HepG2 (cell line): ENCODE measurements at regions of chrX and their contacts with region 1.

Region 1: DNA sequence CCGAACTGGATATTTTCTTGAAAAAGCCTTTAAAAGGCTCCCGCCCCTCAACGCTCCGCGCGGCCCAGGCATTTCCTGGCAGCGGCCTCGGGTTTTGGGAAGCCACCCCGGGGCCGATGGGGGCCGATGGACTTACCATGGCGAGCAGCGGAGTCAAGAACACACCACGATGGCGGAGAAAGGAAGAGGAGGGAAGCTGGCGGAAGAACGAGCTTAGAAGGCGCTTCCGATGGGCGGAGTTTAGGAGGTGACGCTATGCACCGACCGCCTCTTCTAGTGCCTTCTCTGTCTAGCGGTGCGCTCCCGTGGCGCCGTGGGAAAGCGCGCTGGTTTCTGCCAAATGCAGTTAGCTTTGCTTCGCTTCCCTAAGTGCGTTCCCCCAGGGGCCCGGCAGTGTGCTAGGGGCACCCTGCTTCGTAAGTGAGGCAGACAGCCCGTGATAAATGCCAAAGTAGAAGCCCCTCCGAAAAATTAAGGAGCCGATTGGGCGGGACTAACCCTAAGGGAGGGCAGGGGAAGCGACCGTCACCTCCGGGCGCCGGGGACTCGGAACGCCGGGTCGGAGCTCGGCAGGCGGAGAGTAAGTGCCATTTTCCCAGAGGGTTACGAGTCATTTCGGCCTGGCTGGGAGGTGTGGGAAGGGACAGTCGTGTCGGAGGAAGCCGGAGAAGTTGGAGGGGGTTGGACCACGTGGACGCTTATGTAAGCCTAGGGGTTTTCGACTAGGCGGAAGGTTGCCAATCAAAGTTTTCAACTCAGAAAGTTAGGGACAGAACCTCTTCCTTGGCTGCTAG is at the start of gene RPL39:
- DNase-seq: peak; percentile 81
- ATAC-seq: peak; percentile 95
- H3K4me3 ChIP-seq: peak within 1 kb of the TSS; percentile 77 to 83 (median 79)
- H3K27ac ChIP-seq: peak within 1 kb of the TSS; percentile 98
- H3K4me1 ChIP-seq: peaks cover 38% of the 10 kb centered on the region
- H3K27me3 ChIP-seq: no peaks in the 10 kb centered on the region
- CTCF ChIP-seq: no peak
- EP300 ChIP-seq: no peak
- POLR2A ChIP-seq: peak; percentile 88 to 92
- RAD21 ChIP-seq: peak; percentile 5; the same call in 1 of the 2 replicates
- total RNA-seq, gene RPL39: 3,547 and 3,928 TPM in 2 replicates

Region 2: DNA sequence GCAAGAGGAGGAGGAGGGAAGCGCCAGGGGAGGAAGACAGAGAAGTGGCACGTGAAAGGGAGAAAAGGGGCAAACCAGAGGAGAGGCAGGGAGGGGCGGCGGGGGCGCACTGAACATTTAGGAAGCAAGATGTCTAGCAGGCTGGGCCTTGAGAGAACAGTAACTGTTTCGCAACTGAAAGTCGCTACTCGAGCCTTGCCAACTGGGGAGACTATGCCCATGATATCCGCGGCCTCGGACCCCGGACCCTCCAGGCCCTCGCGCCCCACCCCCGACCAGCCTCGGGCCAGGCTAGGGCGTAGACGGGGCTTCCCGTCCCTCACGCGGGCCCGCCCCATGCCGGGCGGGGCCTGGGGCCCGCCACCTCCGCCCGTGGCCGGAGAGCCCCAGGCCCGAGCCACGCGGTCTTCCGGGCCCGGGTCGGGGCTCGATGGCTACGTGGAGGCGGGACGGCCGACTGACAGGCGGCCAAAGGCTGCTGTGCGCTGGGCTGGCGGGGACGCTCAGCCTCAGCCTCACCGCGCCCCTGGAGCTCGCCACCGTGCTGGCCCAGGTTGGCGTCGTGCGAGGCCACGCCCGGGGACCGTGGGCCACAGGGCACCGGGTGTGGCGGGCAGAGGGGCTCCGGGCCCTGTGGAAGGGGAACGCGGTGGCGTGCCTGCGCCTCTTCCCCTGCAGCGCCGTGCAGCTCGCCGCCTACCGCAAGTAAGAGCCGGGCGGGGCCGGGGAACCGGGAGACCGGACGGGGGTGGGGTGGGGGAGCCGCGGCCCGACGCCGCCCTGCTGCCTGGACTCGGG is 392.5 kb before region 1 on chrX and contains the start of gene SLC25A43:
- CTCF ChIA-PET with region 1: no interaction called
- POLR2A ChIA-PET with region 1: no interaction called
- in situ Hi-C with region 1: no loop called
- intact Hi-C with region 1: no loop called
- DNase-seq: no peak
- ATAC-seq: peak; percentile 93
- H3K4me3 ChIP-seq: peak within 1 kb of the TSS; percentile 60 to 71 (median 69); a peak in 5 of 6 replicates
- H3K27ac ChIP-seq: peak within 1 kb of the TSS; percentile 65
- H3K4me1 ChIP-seq: peaks cover 27% of the 10 kb centered on the region
- H3K27me3 ChIP-seq: no peaks in the 10 kb centered on the region
- CTCF ChIP-seq: no peak
- EP300 ChIP-seq: no peak
- POLR2A ChIP-seq: peak; percentile 43 to 58; a peak in 3 of 4 replicates
- RAD21 ChIP-seq: no peak
- total RNA-seq, gene SLC25A43: 13.2 and 14.1 TPM in 2 replicates

Region 3: DNA sequence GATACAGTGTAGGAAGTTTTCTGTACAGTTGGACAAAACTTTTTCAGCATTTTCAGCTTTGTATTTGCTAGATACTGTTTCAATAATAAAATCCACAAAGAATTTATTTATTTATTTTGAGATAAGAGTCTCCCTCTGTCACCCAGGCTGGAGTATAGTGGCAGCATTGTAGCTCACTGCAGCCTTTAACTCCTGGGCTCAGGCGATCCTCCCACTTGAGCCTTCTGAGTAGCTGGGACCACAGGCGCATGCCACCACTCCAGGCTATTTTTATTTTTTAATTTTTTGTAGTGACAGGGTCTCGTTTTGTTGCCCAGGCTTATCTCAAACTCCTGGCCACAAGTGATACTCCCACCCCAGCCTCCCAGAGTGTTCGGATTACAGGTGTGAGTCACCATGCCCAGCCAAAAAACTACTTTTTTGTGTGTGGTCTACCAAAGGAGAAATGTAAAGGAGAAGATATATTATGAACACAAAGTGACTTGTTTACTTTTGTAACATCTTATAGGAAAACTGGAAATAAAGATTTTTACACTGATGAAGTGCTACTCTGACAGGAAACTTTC is 46.3 kb before region 1 on chrX:
- CTCF ChIA-PET with region 1: no interaction called
- POLR2A ChIA-PET with region 1: no interaction called
- in situ Hi-C with region 1: no loop called
- intact Hi-C with region 1: no loop called
- DNase-seq: no peak
- ATAC-seq: 0 out of 3 replicates have a peak, but pooled peaks have one; percentile 29
- H3K4me3 ChIP-seq: no peak overlapping the region
- H3K27ac ChIP-seq: no peak overlapping the region
- H3K4me1 ChIP-seq: no peaks in the 10 kb centered on the region
- H3K27me3 ChIP-seq: no peaks in the 10 kb centered on the region
- CTCF ChIP-seq: no peak
- EP300 ChIP-seq: no peak
- POLR2A ChIP-seq: no peak
- RAD21 ChIP-seq: no peak

Region 4: DNA sequence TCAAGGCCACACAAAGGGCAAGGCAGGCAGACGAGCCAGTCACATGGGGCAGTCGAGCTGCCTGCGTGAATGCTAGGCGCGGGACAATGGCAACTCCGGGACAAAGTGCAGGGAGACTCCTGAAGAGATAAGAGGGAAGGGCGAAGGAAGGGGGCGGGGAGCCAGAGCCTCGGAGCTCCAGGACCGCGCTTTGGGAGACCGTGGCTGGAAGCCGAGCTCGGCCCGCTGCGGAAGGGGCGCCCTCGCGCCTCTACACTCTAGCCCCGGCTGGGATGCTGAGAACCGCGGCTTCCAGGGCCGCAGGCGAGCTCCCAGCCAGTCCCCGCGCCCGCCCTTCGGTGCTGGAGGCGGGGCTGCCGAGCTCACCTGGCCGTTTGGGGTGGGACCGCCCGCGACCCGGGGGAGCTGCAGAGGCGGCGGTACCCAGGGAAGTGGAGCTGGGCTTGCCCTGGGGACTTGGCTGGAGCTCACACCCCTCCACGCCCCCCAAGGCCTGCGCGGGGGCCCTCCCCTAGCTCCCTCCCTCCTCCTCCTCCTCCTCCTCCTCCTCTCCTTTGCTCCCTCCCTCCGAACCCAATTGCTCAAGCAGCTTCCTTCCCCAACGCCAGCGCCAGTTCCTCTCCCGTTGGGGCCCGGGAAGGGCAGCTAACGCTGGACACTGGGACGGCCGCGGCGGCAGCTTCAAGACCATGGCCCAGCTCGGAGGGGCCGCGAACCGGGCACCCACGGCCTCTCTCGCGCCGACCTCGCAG is 33.5 kb before region 1 on chrX and contains the start of gene SOWAHD:
- CTCF ChIA-PET with region 1: no interaction called
- POLR2A ChIA-PET with region 1: interaction called, 54 read pairs
- in situ Hi-C with region 1: no loop called
- intact Hi-C with region 1: no loop called
- DNase-seq: peak; percentile 50
- ATAC-seq: peak; percentile 76
- H3K4me3 ChIP-seq: peak within 1 kb of the TSS; percentile 47 to 69 (median 64); a peak in 5 of 6 replicates
- H3K27ac ChIP-seq: peak within 1 kb of the TSS; percentile 68
- H3K4me1 ChIP-seq: peaks cover 40% of the 10 kb centered on the region
- H3K27me3 ChIP-seq: no peaks in the 10 kb centered on the region
- CTCF ChIP-seq: no peak; the same call in 1 of the 2 replicates
- EP300 ChIP-seq: peak in 1 of 2 experiments; percentile 21; a peak in 1 of 4 replicates
- POLR2A ChIP-seq: no peak; a peak in 2 of 4 replicates
- RAD21 ChIP-seq: no peak
- total RNA-seq, gene SOWAHD: 0.62 and 1.0 TPM in 2 replicates

Region 5: GRCh38 chrX:119817130-119817690 is 25.6 kb after region 1 on chrX:
- CTCF ChIA-PET with region 1: no interaction called
- POLR2A ChIA-PET with region 1: interaction called, 16 read pairs
- in situ Hi-C with region 1: no loop called
- intact Hi-C with region 1: no loop called
- DNase-seq: no peak
- ATAC-seq: no peak
- H3K4me3 ChIP-seq: no peak overlapping the region
- H3K27ac ChIP-seq: no peak overlapping the region
- H3K4me1 ChIP-seq: peaks cover 22% of the 10 kb centered on the region
- H3K27me3 ChIP-seq: no peaks in the 10 kb centered on the region
- CTCF ChIP-seq: no peak
- EP300 ChIP-seq: no peak
- POLR2A ChIP-seq: no peak
- RAD21 ChIP-seq: no peak

Region 6: GRCh38 chrX:119852382-119853353 is 61.0 kb after region 1 on chrX and contains the start of gene UPF3B:
- CTCF ChIA-PET with region 1: no interaction called
- POLR2A ChIA-PET with region 1: interaction called, 78 read pairs
- in situ Hi-C with region 1: no loop called
- intact Hi-C with region 1: no loop called
- DNase-seq: peak; percentile 97
- ATAC-seq: peak; percentile 96
- H3K4me3 ChIP-seq: peak within 1 kb of the TSS; percentile 63 to 83 (median 80)
- H3K27ac ChIP-seq: peak within 1 kb of the TSS; percentile 89
- H3K4me1 ChIP-seq: 0 out of 2 replicates have a peak, but pooled peaks cover 27% of the 10 kb centered on the region
- H3K27me3 ChIP-seq: no peaks in the 10 kb centered on the region
- CTCF ChIP-seq: peak; percentile 8; the same call in 1 of the 2 replicates
- EP300 ChIP-seq: no peak
- POLR2A ChIP-seq: peak; percentile 74 to 77
- RAD21 ChIP-seq: no peak
- total RNA-seq, gene UPF3B: 7.2 and 8.2 TPM in 2 replicates

Region 7: DNA sequence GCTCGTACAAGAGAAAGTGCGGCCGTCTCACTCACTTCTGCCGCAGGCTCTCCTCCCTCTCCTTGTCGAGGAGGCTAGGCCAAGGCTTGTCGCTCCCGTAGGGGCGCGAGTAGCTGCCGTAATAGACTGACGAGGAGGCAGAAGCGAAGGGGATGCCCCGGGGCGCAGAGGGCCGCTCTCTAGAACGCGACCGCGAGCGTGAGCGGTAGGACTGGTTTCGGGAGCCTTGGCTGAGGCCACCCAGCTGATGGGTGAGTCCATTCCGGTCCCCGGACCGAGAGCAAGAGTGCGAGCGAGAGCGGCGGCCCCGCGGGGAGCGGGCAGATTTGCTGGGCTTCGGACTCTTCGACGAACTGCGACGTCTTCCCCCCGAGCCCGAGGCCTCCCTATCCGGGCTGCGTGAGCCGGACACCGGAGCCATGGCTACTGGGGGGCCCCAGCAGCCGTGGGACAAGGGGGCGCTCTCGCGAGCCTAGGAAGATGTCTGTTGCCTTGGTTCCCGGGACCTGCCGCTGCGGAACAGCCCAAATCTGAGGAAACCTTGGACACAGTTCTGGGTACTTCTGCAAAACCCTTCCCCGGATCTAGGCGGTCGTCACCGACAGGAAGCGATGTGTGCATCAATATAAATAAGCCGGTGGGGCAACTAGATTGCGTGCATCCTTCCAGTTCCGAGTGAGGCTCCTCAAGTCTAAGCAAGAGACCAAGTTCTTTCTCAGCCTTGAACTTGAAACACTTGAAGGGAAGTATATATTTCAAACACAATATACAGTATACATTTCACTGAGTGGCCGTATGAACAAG is 151.8 kb after region 1 on chrX and contains the start of gene NKAP:
- CTCF ChIA-PET with region 1: no interaction called
- POLR2A ChIA-PET with region 1: interaction called, 10 read pairs
- in situ Hi-C with region 1: no loop called
- intact Hi-C with region 1: no loop called
- DNase-seq: peak; percentile 86
- ATAC-seq: peak; percentile 93
- H3K4me3 ChIP-seq: peak within 1 kb of the TSS; percentile 67 to 85 (median 76)
- H3K27ac ChIP-seq: peak within 1 kb of the TSS; percentile 89
- H3K4me1 ChIP-seq: peaks cover 12% of the 10 kb centered on the region
- H3K27me3 ChIP-seq: no peaks in the 10 kb centered on the region
- CTCF ChIP-seq: peak; percentile 65
- EP300 ChIP-seq: peak in 1 of 2 experiments; percentile 41; a peak in 1 of 4 replicates
- POLR2A ChIP-seq: peak; percentile 59 to 74
- RAD21 ChIP-seq: 0 out of 2 replicates have a peak, but pooled peaks have one; percentile 10
- total RNA-seq, gene NKAP: 6.1 and 9.0 TPM in 2 replicates